CD14-positive monocyte (primary cell): ENCODE measurements at regions of chr14 and their contacts with region 1.

Region 1: DNA sequence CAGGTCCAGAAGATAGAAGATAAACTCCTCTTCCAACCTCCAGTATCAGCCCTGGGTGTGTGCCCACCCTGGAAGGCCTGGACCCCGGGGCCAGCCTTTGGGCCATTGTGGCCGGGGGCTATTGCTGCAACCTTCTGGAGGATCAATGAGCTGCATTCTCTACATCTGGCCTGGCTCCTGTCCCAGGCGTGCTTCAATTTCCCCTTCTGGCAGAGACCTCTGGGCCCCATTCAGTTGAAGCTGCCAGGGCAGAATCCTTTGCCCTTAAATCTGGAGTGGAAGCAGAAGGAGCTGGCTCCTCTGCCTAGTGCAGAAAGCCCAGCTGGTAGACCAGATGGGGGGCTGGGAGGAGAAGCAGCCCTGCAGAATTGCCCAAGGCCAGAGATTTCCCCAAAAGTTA is 10.0 kb downstream of the NYNRIN start:
- DNase-seq: no peak
- H3K4me3 ChIP-seq: no peak overlapping the region
- H3K4me3 Mint-ChIP-seq: no peak overlapping the region
- H3K27ac ChIP-seq: no peak overlapping the region
- H3K27ac Mint-ChIP-seq: no peak overlapping the region
- H3K4me1 ChIP-seq: no peaks in the 10 kb centered on the region
- H3K4me1 Mint-ChIP-seq: no peaks in the 10 kb centered on the region
- H3K27me3 ChIP-seq: no peaks in the 10 kb centered on the region
- H3K27me3 Mint-ChIP-seq: peaks cover 0 to 4% (median 2%) of the 10 kb centered on the region in 3 donors
- CTCF ChIP-seq: no peak

Region 2: DNA sequence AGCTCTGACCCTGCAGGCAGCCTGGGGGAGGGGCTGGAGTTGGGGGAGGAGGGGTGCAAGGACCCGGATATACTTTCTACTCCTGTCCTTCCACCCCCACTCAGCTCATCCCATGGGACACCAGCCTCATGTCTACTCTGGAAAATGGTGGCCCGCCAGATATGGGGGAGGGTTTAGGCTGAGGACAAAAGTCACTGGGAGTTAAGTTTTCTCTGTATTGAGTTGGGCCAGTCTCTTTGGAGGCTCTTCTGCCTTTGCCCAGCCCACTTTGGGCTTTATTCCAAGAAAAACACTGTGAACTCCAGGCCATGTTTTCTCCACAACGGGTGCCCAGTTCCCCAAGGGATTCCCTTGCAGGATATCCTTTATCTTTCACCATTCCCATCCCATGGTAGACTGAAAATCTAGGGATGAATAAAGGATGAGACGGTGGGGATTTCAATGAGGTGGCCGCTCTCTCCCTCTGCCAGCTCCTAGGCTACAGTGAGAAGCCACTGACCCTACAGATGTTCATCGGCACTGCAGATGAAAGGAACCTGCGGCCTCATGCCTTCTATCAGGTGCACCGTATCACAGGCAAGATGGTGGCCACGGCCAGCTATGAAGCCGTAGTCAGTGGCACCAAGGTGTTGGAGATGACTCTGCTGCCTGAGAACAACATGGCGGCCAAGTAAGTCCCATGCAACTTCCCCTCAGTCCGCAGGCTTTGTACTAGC is 35.9 kb before region 1 on chr14:
- intact Hi-C with region 1: loop called in 1 of 2 experiments (anchors 5 kb)
- DNase-seq: no peak
- H3K4me3 ChIP-seq: no peak overlapping the region
- H3K4me3 Mint-ChIP-seq: no peak overlapping the region
- H3K27ac ChIP-seq: no peak overlapping the region
- H3K27ac Mint-ChIP-seq: no peak overlapping the region
- H3K4me1 ChIP-seq: peaks cover 5 to 9% of the 10 kb centered on the region in 2 donors
- H3K4me1 Mint-ChIP-seq: peaks cover under 1% of the 10 kb centered on the region
- H3K27me3 ChIP-seq: peaks cover 12 to 27% of the 10 kb centered on the region in 2 donors
- H3K27me3 Mint-ChIP-seq: peaks cover 28 to 36% (median 34%) of the 10 kb centered on the region in 3 donors
- CTCF ChIP-seq: no peak